ENCODE measurements at regions of chr7 and their contacts with region 1.

Region 1: DNA sequence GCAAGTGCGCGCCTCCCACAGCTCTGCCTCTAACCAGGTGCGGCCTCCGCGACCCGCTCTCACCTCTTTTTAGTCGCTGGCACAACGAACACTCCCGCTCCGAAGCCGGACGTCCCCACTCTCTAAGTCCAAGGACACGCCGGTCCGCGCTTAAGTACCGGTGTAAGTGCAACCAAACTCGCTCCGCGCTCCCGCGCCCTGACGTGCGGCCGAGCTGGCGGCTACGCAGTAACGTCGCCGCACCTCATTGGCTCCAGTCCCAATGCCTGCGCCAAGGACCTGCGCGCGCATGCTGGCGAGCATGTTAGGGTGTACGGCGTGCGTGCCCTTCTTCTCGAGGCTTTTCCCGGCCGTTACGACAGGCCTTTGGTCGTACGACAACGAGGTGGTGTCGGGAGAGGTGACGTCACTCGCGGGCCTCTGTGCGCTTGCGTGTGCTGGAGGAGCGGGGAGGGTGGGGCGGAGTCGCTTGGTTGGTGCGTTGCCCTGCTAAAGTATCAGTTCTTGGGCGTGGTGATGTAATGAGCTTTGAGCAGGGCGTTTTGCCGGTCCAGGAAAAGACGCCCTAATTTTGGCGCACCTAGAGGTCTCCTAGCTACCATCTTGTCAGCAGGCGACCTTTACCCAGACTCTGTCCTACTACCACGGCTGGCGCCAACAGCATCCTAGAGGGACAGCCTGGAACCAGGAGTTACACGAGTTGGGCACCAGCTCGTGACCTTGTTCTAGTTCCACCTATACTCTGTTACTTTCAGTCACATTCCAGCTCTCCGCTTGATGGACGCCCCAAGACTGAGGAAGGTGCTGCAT is at the start of gene CYCS:
- DNase-seq: peak; percentile 95
- H3K4me3 ChIP-seq: peak within 1 kb of the TSS; percentile 77 to 88
- H3K27ac ChIP-seq: peak within 1 kb of the TSS; percentile 73 to 93
- H3K4me1 ChIP-seq: peaks cover 12 to 16% of the 10 kb centered on the region in 2 experiments
- H3K27me3 ChIP-seq: no peaks in the 10 kb centered on the region
- CTCF ChIP-seq: no peak
- EP300 ChIP-seq: no peak
- RAD21 ChIP-seq: no peak
- polyA plus RNA-seq, gene CYCS: 22.9 and 23.8 TPM in 2 replicates

Region 2: GRCh38 chr7:25139536-25139935 is 14.2 kb after region 1 on chr7:
- CTCF ChIA-PET with region 1: no interaction called
- POLR2A ChIA-PET with region 1: interaction called, 10 read pairs
- DNase-seq: no peak
- H3K4me3 ChIP-seq: no peak overlapping the region
- H3K27ac ChIP-seq: no peak overlapping the region
- H3K4me1 ChIP-seq: no peaks in the 10 kb centered on the region
- H3K27me3 ChIP-seq: no peaks in the 10 kb centered on the region
- CTCF ChIP-seq: no peak
- EP300 ChIP-seq: no peak
- RAD21 ChIP-seq: no peak